ENCODE measurements at regions of chr14 and their contacts with region 1.

Region 1: GRCh38 chr14:21414137-21414631 is 30.4 kb upstream of the SUPT16H start:
- DNase-seq: no peak
- ATAC-seq: no peak
- H3K4me3 ChIP-seq: no peak overlapping the region
- H3K27ac ChIP-seq: no peak overlapping the region
- H3K4me1 ChIP-seq: no peaks in the 10 kb centered on the region
- H3K27me3 ChIP-seq: no peaks in the 10 kb centered on the region
- CTCF ChIP-seq: no peak
- EP300 ChIP-seq: no peak
- POLR2A ChIP-seq: no peak
- RAD21 ChIP-seq: no peak

Region 2: DNA sequence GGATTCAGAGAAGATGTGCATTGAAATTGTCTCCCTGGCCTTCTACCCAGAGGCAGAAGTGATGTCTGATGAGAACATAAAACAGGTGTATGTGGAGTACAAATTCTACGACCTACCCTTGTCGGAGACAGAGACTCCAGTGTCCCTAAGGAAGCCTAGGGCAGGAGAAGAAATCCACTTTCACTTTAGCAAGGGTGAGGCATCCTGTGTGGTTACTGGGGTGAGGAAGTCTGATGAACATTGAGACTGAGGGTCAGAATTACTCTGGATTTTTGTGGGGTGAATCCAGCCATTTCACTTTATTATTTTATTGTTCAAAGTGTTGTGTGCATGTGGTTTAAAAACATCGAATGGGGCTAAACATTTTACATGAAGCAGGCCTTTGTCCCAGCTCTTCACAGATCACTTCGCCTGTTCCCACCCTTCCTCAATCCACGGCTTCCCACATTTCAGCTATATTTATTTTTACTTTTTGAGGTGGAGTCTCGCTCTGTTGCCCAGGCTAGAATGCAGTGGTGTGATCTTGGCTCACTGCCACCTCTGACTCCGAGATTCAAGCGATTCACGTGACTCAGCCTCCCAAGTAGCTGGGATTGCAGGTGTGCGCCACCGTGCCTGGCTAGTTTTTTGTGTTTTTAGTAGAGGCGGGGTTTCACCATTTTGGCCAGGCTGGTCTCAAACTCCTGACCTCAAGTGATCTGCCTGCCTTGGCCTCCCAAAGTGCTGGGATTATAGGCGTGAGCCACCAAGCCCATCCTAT is 71.0 kb before region 1 on chr14:
- CTCF ChIA-PET with region 1: no interaction called
- POLR2A ChIA-PET with region 1: no interaction called
- in situ Hi-C with region 1: no loop called
- intact Hi-C with region 1: no loop called
- DNase-seq: no peak
- ATAC-seq: no peak
- H3K4me3 ChIP-seq: no peak overlapping the region
- H3K27ac ChIP-seq: no peak overlapping the region
- H3K4me1 ChIP-seq: no peaks in the 10 kb centered on the region
- H3K27me3 ChIP-seq: no peaks in the 10 kb centered on the region
- CTCF ChIP-seq: no peak
- EP300 ChIP-seq: no peak
- POLR2A ChIP-seq: no peak
- RAD21 ChIP-seq: no peak

Region 3: GRCh38 chr14:21367582-21368144 is 46.5 kb before region 1 on chr14:
- CTCF ChIA-PET with region 1: no interaction called
- POLR2A ChIA-PET with region 1: no interaction called
- in situ Hi-C with region 1: no loop called
- intact Hi-C with region 1: loop called (anchors 2 kb)
- DNase-seq: no peak
- ATAC-seq: no peak
- H3K4me3 ChIP-seq: no peak overlapping the region
- H3K27ac ChIP-seq: no peak overlapping the region
- H3K4me1 ChIP-seq: no peaks in the 10 kb centered on the region
- H3K27me3 ChIP-seq: no peaks in the 10 kb centered on the region
- CTCF ChIP-seq: no peak
- EP300 ChIP-seq: no peak
- POLR2A ChIP-seq: no peak
- RAD21 ChIP-seq: no peak

Measured in K562 (cell line).